ENCODE measurements at regions of chr7 and their contacts with region 1.

Region 1: DNA sequence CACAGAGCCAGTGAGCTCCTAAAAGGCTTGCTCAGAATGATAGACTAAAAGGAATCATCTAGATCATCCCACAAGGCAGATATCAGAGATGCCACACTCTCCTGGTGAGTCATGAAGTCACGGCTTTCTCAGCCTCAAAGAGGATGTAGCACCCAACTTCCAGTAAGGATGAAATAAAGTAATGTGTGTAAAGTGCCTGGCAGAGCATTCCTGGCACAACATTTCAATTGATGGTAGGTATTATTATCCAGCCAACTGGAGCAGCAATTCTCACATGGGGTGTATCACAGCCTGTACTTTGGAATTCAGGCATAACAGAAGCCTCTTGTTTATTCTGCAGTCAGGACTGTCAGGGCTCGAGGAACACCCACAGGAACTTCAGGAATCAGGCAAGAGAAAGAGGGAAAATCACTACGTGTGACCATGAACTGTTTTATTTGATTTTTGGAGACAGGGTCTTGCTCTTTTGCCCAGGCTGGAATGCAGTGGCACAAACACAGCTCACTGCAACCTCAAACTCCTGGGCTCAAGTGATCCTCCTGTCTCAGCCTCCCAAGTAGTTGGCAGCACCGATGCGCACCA is 5.3 kb upstream of the NAT16 start:
- DNase-seq: peak in 1 of 2 experiments; percentile 68
- ATAC-seq: peak; percentile 34 to 71
- H3K4me3 ChIP-seq: no peak overlapping the region
- H3K27ac ChIP-seq: peak overlapping the region in 1 of 2 experiments; percentile 7; a peak in 2 of 6 replicates
- H3K4me1 ChIP-seq: peaks cover 20% of the 10 kb centered on the region
- CTCF ChIP-seq: no peak
- EP300 ChIP-seq: no peak
- POLR2A ChIP-seq: no peak
- RAD21 ChIP-seq: no peak

Region 2: GRCh38 chr7:101165075-101165957 is 20.0 kb before region 1 on chr7 and contains the start of gene VGF:
- CTCF ChIA-PET with region 1: interaction called, 65 read pairs
- POLR2A ChIA-PET with region 1: interaction called, 5 read pairs
- DNase-seq: peak; percentile 92 to 96
- ATAC-seq: peak; percentile 51 to 74; a peak in 5 of 6 replicates
- H3K4me3 ChIP-seq: peak within 1 kb of the TSS; percentile 54
- H3K27ac ChIP-seq: peak within 1 kb of the TSS; percentile 9 to 83; a peak in 4 of 6 replicates
- H3K4me1 ChIP-seq: peaks cover 86% of the 10 kb centered on the region
- CTCF ChIP-seq: no peak
- EP300 ChIP-seq: no peak
- POLR2A ChIP-seq: 0 out of 2 replicates have a peak, but pooled peaks have one; percentile 21
- RAD21 ChIP-seq: no peak
- polyA plus RNA-seq, gene VGF: 0.16 and 0.21 TPM in 2 replicates

Region 3: GRCh38 chr7:101173752-101174244 is 11.6 kb before region 1 on chr7:
- CTCF ChIA-PET with region 1: interaction called, 68 read pairs
- POLR2A ChIA-PET with region 1: interaction called, 3 read pairs
- DNase-seq: peak; percentile 59 to 81
- ATAC-seq: peak; percentile 57 to 70
- H3K4me3 ChIP-seq: peak overlapping the region; percentile 33
- H3K27ac ChIP-seq: peak overlapping the region; percentile 52 to 80; a peak in 5 of 6 replicates
- H3K4me1 ChIP-seq: peaks cover 49% of the 10 kb centered on the region
- CTCF ChIP-seq: no peak
- EP300 ChIP-seq: no peak
- POLR2A ChIP-seq: no peak
- RAD21 ChIP-seq: no peak

Measured in A549 (cell line).